ENCODE measurements at regions of chr4 and their contacts with region 1.

Region 1: DNA sequence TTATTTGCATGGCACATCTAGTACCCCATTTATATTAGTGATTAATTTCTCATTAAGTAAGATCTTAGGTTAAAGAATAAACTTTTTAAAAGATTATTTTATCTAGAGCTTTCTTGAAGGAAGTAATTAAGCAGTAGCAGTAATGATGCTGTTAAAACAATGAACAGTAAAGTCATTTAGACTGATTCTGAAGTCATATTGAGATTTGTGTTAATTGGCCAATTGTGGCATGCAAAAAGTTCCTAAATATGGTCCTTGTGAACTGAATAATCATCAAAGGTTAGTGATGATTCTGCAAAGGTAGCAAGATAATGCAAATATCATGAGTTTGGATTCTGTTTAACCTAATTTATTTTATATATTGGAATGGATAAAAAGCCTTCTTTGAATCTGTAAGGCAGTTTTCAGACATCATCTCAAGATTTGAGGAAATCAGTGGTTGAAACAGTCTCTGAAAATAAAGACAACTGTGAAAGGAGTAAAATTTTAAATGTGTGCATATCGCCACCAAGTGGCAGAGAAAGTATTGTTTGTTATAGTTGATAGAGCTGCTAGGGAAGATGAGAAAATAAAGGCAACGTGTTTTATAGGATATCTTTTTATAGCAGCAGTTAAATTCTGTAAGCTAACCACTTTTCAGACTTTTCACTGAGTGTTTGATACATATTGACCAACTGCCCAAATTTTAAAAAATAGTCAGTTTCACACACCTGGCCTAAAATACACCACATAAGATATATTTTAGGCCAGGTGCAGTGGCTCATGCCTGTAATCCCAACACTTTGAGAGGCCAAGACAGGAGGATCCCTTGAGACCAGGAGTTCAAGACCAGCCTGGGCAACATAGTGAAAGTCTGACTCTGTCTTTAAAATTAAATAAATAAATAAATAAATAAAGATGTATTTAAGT is 79.6 kb downstream of the CCKAR start:
- DNase-seq: peak; percentile 67
- H3K4me3 ChIP-seq: no peak overlapping the region
- H3K27ac ChIP-seq: no peak overlapping the region
- H3K4me1 ChIP-seq: no peaks in the 10 kb centered on the region
- H3K27me3 ChIP-seq: no peaks in the 10 kb centered on the region
- CTCF ChIP-seq: peak; percentile 31 to 42
- POLR2A ChIP-seq: no peak

Region 2: GRCh38 chr4:25925486-25926201 is 485.0 kb before region 1 on chr4:
- CTCF ChIA-PET with region 1: interaction called, 8 read pairs
- POLR2A ChIA-PET with region 1: no interaction called
- dilution Hi-C with region 1: no loop called
- intact Hi-C with region 1: loop called (anchors 5 kb)
- DNase-seq: peak; percentile 29
- H3K4me3 ChIP-seq: no peak overlapping the region
- H3K27ac ChIP-seq: no peak overlapping the region
- H3K4me1 ChIP-seq: no peaks in the 10 kb centered on the region
- H3K27me3 ChIP-seq: no peaks in the 10 kb centered on the region
- CTCF ChIP-seq: peak; percentile 53 to 58
- POLR2A ChIP-seq: no peak

Region 3: DNA sequence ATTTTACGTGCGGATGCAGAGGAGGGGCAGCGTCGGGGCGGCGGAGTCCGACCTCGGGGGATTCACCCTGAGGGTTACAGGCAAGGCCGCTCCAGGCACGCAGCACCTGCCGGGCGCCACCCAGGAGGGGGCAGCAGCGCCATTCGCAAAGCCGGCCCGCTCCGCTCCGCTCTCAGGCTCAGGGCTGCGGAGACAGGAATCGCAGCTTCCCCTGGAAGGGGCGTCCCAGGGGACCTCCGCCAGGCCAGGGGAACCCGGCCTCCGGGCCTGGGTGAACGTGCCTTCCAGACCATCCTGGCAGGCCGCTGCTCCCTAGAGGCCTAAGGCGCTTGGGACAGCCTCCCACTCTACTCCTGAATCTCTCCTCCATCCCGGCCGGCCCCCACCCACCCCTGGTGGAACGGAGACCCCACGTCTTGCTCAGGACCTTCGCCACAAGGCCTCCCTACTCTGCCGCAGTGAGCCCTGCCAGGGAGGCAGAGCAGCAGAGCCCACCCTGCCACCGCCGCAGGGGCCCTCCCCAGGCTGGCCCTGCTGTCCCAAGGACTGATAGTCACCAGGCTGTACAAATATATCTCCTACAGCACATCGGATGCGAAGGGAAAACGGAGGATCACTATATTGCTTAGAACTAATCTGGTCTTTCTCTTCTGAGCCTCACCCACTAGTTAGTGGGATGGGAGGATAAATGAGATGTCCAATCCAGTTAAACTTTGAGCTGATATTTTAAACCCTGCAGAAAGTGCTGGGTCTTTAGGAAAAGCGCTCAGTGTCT is 381.7 kb before region 1 on chr4:
- CTCF ChIA-PET with region 1: interaction called, 10 read pairs
- POLR2A ChIA-PET with region 1: no interaction called
- dilution Hi-C with region 1: no loop called
- intact Hi-C with region 1: no loop called
- DNase-seq: peak; percentile 19
- H3K4me3 ChIP-seq: no peak overlapping the region
- H3K27ac ChIP-seq: no peak overlapping the region
- H3K4me1 ChIP-seq: no peaks in the 10 kb centered on the region
- H3K27me3 ChIP-seq: peaks cover 4 to 8% of the 10 kb centered on the region in 2 experiments
- CTCF ChIP-seq: peak; percentile 31 to 69
- POLR2A ChIP-seq: no peak

Region 4: DNA sequence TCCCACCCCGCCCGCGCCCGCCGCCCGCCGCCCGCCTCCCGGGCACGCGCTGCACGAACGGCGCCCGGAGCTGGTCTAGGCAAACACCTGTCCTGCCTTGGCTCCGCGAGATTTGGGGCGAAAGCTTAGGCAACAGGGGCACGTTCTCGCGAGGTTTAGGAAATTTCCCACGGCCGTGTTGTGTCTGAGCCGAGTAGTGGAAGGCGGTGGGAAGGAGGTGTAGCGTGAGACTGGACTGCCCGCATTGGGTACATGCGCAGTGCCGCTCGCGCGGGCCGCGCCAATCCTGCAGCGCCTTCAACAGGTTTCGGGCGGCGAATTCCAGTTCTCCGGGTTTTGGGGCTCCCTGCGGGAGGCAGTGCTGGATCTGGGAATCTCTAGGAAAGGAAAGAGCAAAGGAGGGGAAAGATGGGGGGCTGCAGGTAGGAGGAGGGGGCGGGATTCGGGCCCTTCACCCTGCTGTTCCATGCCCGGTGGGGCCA is 91.1 kb before region 1 on chr4:
- CTCF ChIA-PET with region 1: interaction called, 15 read pairs
- POLR2A ChIA-PET with region 1: no interaction called
- dilution Hi-C with region 1: no loop called
- intact Hi-C with region 1: no loop called
- DNase-seq: peak; percentile 100
- H3K4me3 ChIP-seq: peak overlapping the region; percentile 76 to 84 (median 79)
- H3K27ac ChIP-seq: peak overlapping the region; percentile 80
- H3K4me1 ChIP-seq: peaks cover 23% of the 10 kb centered on the region
- H3K27me3 ChIP-seq: no peaks in the 10 kb centered on the region
- CTCF ChIP-seq: no peak
- POLR2A ChIP-seq: no peak

Region 5: GRCh38 chr4:26420913-26421312 is 10.3 kb after region 1 on chr4:
- CTCF ChIA-PET with region 1: interaction called, 26 read pairs
- POLR2A ChIA-PET with region 1: no interaction called
- dilution Hi-C with region 1: no loop called
- intact Hi-C with region 1: no loop called
- DNase-seq: no peak
- H3K4me3 ChIP-seq: no peak overlapping the region
- H3K27ac ChIP-seq: no peak overlapping the region
- H3K4me1 ChIP-seq: no peaks in the 10 kb centered on the region
- H3K27me3 ChIP-seq: no peaks in the 10 kb centered on the region
- CTCF ChIP-seq: no peak
- POLR2A ChIP-seq: no peak

Region 6: GRCh38 chr4:26670903-26671537 is 260.4 kb after region 1 on chr4:
- CTCF ChIA-PET with region 1: no interaction called
- POLR2A ChIA-PET with region 1: no interaction called
- dilution Hi-C with region 1: no loop called
- intact Hi-C with region 1: no loop called
- DNase-seq: no peak
- H3K4me3 ChIP-seq: no peak overlapping the region
- H3K27ac ChIP-seq: no peak overlapping the region
- H3K4me1 ChIP-seq: no peaks in the 10 kb centered on the region
- H3K27me3 ChIP-seq: no peaks in the 10 kb centered on the region
- CTCF ChIP-seq: no peak
- POLR2A ChIP-seq: no peak

Region 7: DNA sequence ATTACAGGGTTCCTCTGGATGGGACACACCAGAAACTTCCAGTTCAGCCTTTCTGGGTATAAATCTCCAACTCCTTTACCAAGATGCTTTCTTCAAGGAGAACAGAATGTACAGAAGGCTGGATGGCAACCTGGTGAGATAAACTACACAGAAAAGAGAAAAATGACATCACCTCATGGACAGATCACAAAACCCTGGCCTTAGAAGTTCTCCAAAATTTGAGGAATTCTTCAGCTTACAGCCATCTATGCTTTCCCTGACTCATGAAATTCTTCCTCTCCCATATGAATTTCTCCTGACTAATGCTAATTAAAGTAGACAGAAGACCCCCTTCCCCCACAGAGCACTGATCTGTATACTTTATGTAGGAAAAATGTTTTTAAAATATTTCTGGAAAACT is 795.4 kb after region 1 on chr4:
- CTCF ChIA-PET with region 1: no interaction called
- POLR2A ChIA-PET with region 1: no interaction called
- dilution Hi-C with region 1: no loop called
- intact Hi-C with region 1: no loop called
- DNase-seq: no peak
- H3K4me3 ChIP-seq: no peak overlapping the region
- H3K27ac ChIP-seq: no peak overlapping the region
- H3K4me1 ChIP-seq: no peaks in the 10 kb centered on the region
- H3K27me3 ChIP-seq: no peaks in the 10 kb centered on the region
- CTCF ChIP-seq: no peak
- POLR2A ChIP-seq: no peak

Measured in endothelial cell of umbilical vein (primary cell).